ENCODE measurements at regions of chr1 and their contacts with region 1.

Region 1: GRCh38 chr1:34786521-34787325 is 5.7 kb downstream of the GJB3 start:
- DNase-seq: peak; percentile 86
- H3K4me3 Mint-ChIP-seq: no peak overlapping the region
- H3K27ac Mint-ChIP-seq: no peak overlapping the region
- H3K4me1 Mint-ChIP-seq: peaks cover 4% of the 10 kb centered on the region
- H3K27me3 Mint-ChIP-seq: peaks cover 24% of the 10 kb centered on the region

Region 2: GRCh38 chr1:34865981-34866761 is 79.4 kb after region 1 on chr1:
- CTCF ChIA-PET with region 1: interaction called, 7 read pairs
- intact Hi-C with region 1: loop called (anchors 1 kb)
- DNase-seq: peak; percentile 95
- H3K4me3 Mint-ChIP-seq: peak overlapping the region; percentile 79
- H3K27ac Mint-ChIP-seq: peak overlapping the region; percentile 86
- H3K4me1 Mint-ChIP-seq: peaks cover 24% of the 10 kb centered on the region
- H3K27me3 Mint-ChIP-seq: peaks cover 2% of the 10 kb centered on the region

Region 3: GRCh38 chr1:35001743-35002142 is 215.0 kb after region 1 on chr1:
- CTCF ChIA-PET with region 1: no interaction called
- intact Hi-C with region 1: no loop called
- DNase-seq: no peak
- H3K4me3 Mint-ChIP-seq: no peak overlapping the region
- H3K27ac Mint-ChIP-seq: no peak overlapping the region
- H3K4me1 Mint-ChIP-seq: no peaks in the 10 kb centered on the region
- H3K27me3 Mint-ChIP-seq: no peaks in the 10 kb centered on the region

Region 4: DNA sequence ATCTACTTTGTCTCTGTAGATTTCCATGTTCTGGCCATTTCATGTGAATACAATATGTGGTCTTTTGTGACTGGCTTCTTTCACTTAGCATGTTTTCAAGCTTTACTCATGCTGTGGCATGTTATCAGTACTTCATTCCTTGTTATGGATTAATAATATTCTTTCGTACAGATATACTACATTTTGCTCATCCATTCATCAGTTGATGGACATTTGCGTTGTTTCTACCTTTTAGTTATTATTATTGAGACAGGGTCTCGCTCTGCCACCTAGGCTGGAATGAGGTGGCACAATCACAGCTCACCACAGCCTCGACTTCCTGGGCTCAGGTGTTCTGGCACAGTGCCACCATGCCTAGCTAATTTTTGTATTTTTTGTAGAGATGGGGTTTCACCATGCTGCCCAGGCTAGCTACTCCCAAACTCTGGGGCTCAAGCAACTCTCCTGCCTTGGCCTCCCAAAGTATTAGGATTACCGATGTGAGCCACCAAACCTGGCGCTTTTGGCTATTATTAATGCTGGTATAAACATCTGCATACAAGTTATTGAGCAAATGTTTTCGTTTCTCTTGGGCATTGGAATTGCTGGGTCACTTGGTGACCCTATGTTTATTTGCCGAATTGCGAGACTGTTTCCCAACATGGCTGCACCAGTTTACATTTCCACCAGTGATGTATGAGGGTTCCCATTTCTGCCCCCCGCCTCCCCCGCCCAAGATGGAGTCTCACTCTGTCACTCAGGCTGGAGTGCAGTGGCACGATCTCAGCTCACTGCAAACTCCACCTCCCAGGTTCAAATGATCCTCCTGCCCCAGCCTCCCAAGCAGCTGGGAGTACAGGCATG is 385.1 kb after region 1 on chr1:
- CTCF ChIA-PET with region 1: no interaction called
- intact Hi-C with region 1: no loop called
- DNase-seq: no peak
- H3K4me3 Mint-ChIP-seq: no peak overlapping the region
- H3K27ac Mint-ChIP-seq: no peak overlapping the region
- H3K4me1 Mint-ChIP-seq: no peaks in the 10 kb centered on the region
- H3K27me3 Mint-ChIP-seq: no peaks in the 10 kb centered on the region

Region 5: DNA sequence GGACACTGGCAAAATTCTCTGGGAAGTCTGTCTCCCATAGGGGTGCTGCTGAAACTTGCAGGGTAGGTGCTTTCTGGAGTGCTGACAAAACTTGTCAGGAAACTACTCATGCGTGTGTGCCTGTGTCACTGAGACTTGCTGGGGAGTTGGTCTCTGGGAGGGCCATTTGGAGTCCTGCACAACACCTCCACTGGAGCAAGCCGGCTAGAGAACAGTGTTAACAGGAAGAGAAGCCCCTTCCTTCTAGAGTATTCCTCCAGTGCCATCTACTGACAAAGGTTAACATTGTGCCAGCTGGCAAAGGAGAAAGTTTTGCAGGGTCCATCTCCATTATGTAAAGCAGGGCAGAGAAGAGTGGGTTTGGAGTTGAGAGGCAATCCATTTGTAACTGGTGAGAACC is 511.7 kb after region 1 on chr1:
- CTCF ChIA-PET with region 1: no interaction called
- intact Hi-C with region 1: loop called (anchors 1 kb)
- DNase-seq: peak; percentile 40
- H3K4me3 Mint-ChIP-seq: no peak overlapping the region
- H3K27ac Mint-ChIP-seq: peak overlapping the region; percentile 28
- H3K4me1 Mint-ChIP-seq: peaks cover 13% of the 10 kb centered on the region
- H3K27me3 Mint-ChIP-seq: no peaks in the 10 kb centered on the region

Measured in activated naive CD4-positive, alpha-beta T cell treated with anti-CD3 and anti-CD28 coated beads for 36 hours (primary cell).